PC-9 (cell line): ENCODE measurements at regions of chr1 and their contacts with region 1.

Region 1: GRCh38 chr1:185646202-185646683 is 87.9 kb upstream of the HMCN1 start:
- DNase-seq: peak; percentile 74 to 78
- H3K4me3 ChIP-seq: no peak overlapping the region
- H3K27ac ChIP-seq: peak overlapping the region; percentile 11; the same call in 1 of the 2 replicates
- H3K4me1 ChIP-seq: peaks cover 16% of the 10 kb centered on the region; the same call in 1 of the 2 replicates
- H3K27me3 ChIP-seq: no peaks in the 10 kb centered on the region
- CTCF ChIP-seq: no peak

Region 2: GRCh38 chr1:185434721-185435120 is 211.5 kb before region 1 on chr1:
- CTCF ChIA-PET with region 1: no interaction called
- POLR2A ChIA-PET with region 1: interaction called, 12 read pairs
- intact Hi-C with region 1: no loop called
- DNase-seq: no peak
- H3K4me3 ChIP-seq: no peak overlapping the region
- H3K27ac ChIP-seq: no peak overlapping the region
- H3K4me1 ChIP-seq: peaks cover 9% of the 10 kb centered on the region
- H3K27me3 ChIP-seq: no peaks in the 10 kb centered on the region
- CTCF ChIP-seq: no peak

Region 3: GRCh38 chr1:185439727-185440415 is 206.4 kb before region 1 on chr1:
- CTCF ChIA-PET with region 1: no interaction called
- POLR2A ChIA-PET with region 1: interaction called, 12 read pairs
- intact Hi-C with region 1: loop called (anchors 5 kb)
- DNase-seq: peak; percentile 70 to 86
- H3K4me3 ChIP-seq: no peak overlapping the region
- H3K27ac ChIP-seq: 0 out of 2 replicates have a peak overlapping the region, but pooled peaks have one; percentile 2
- H3K4me1 ChIP-seq: peaks cover 16% of the 10 kb centered on the region
- H3K27me3 ChIP-seq: no peaks in the 10 kb centered on the region
- CTCF ChIP-seq: no peak

Region 4: GRCh38 chr1:185846672-185847444 is 200.6 kb after region 1 on chr1:
- CTCF ChIA-PET with region 1: no interaction called
- POLR2A ChIA-PET with region 1: no interaction called
- intact Hi-C with region 1: no loop called
- DNase-seq: no peak
- H3K4me3 ChIP-seq: no peak overlapping the region
- H3K27ac ChIP-seq: no peak overlapping the region
- H3K4me1 ChIP-seq: no peaks in the 10 kb centered on the region
- H3K27me3 ChIP-seq: no peaks in the 10 kb centered on the region
- CTCF ChIP-seq: no peak